ENCODE measurements at regions of chr7 and their contacts with region 1.

Region 1: GRCh38 chr7:100119062-100119700 is at the starts of genes CNPY4 and TAF6:
- DNase-seq: peak; percentile 97
- ATAC-seq: peak; percentile 91
- total RNA-seq, gene CNPY4: 10.6 TPM
- total RNA-seq, gene TAF6: 29.3 TPM

Region 2: GRCh38 chr7:100101016-100101862 is 17.9 kb before region 1 on chr7 and contains the starts of genes AP4M1 and MCM7:
- intact Hi-C with region 1: loop called (anchors 1 kb)
- DNase-seq: peak; percentile 100
- ATAC-seq: peak; percentile 97
- total RNA-seq, gene AP4M1: 10.1 TPM
- total RNA-seq, gene MCM7: 25.4 TPM

Measured in Right ventricle myocardium inferior (tissue), 1 donor.